Panc1 (cell line): ENCODE measurements at regions of chr11 and their contacts with region 1.

Region 1: DNA sequence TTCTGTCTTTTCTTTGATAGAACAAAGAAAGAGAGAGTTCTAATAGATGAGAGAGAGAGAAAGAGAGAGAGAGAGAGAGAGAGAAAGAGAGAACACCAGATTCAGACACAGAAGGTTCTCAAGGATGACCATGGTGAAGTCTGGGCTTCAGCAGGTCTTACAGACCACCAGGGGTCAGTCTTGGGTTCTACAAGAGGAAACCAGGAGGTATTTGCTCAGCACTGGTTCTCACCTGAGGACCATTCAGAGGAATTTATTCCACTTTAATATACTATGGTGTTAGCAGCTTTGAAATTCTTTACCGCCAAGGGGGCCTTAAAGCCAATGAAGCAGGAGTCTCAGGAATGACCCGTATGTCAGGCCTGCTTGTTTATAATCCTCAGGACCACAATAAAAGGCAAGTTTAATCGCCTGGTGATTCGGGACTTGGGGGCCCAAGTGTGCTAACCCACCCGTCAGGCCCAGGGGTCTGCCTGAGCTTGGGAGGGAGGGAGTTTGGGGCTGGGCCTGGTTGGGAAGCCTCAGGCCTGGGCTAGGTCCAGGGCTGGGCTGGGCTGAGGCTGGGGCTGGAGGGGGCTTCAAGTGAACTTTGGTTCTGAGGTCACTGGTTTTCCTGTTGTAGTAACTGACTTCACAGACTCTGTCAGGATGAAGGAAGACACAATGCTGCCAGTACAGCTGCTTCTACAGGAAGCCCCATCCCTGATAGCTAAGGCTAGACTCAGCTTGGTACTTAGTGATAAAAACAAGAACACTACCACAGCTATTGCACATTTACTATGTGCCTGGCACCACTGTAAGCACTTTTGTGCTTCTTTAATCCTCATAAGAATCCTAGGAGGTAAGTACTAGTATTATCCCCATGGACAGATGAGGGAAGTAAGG is 179.2 kb upstream of the ZBED5 start:
- DNase-seq: peak; percentile 45
- ATAC-seq: peak; percentile 91
- H3K4me3 ChIP-seq: no peak overlapping the region
- H3K27ac ChIP-seq: no peak overlapping the region
- H3K4me1 ChIP-seq: no peaks in the 10 kb centered on the region
- H3K27me3 ChIP-seq: no peaks in the 10 kb centered on the region
- CTCF ChIP-seq: peak; percentile 90

Region 2: DNA sequence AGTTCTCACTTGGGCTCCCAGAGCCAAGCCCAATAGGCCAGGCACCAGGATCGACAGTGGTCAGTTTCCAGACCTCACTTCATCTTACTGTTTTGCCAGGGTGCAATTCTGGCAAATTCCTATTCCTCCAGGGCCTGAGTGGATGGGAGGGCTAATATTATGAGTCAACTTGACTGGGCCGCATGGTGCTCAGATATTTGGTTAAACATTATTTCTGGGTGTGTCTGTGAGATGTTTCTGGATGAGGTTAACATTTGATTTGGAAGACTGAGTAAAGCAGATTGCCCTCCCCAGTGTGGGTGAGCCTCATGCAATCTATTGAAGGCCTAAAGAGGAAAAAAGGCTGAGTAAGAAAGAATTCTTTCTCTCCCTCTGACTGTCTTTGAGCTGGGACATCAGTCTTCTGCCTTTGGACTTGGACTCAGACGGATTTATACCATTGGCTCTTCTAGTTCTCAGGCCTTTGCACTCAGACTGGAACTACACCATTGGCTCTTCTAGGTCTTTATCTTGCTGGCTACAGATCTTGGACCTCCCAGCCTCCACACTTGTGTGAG is 46.4 kb before region 1 on chr11:
- CTCF ChIA-PET with region 1: no interaction called
- POLR2A ChIA-PET with region 1: no interaction called
- in situ Hi-C with region 1: no loop called
- intact Hi-C with region 1: no loop called
- DNase-seq: no peak
- ATAC-seq: no peak
- H3K4me3 ChIP-seq: no peak overlapping the region
- H3K27ac ChIP-seq: no peak overlapping the region
- H3K4me1 ChIP-seq: no peaks in the 10 kb centered on the region
- H3K27me3 ChIP-seq: no peaks in the 10 kb centered on the region
- CTCF ChIP-seq: no peak

Region 3: DNA sequence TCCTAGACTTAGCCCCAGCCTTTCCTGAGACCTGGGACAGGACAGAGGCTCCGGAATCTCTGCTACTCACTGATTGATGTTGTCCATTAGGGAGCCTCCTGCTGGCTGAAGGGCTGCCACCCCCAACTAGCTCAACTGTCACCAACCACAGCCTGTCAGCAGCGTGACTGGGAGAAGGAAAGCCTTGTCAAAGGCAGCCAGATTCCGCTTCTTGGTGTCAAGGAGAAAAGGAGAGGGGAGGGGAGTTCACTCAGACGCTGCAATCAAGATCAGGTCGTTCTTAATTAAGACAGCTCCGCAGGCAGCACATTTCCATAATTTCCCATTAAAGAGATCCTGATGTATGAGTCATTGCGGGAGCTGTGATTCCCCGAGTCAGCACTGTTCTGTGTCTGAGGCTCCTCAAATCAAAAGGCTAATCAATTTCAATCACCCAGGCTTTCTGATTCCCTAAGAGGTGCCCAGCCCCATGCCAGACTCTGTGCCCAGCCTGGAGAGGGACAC is 26.4 kb before region 1 on chr11:
- CTCF ChIA-PET with region 1: no interaction called
- POLR2A ChIA-PET with region 1: no interaction called
- in situ Hi-C with region 1: no loop called
- intact Hi-C with region 1: no loop called
- DNase-seq: no peak
- ATAC-seq: peak; percentile 98
- H3K4me3 ChIP-seq: peak overlapping the region in 1 of 2 experiments; percentile 15; a peak in 2 of 4 replicates
- H3K27ac ChIP-seq: peak overlapping the region; percentile 36
- H3K4me1 ChIP-seq: peaks cover 12% of the 10 kb centered on the region
- H3K27me3 ChIP-seq: no peaks in the 10 kb centered on the region
- CTCF ChIP-seq: peak; percentile 72

Region 4: GRCh38 chr11:11157185-11157584 is 120.1 kb after region 1 on chr11:
- CTCF ChIA-PET with region 1: no interaction called
- POLR2A ChIA-PET with region 1: no interaction called
- in situ Hi-C with region 1: no loop called
- intact Hi-C with region 1: loop called (anchors 10 kb)
- DNase-seq: no peak
- ATAC-seq: peak; percentile 87
- H3K4me3 ChIP-seq: no peak overlapping the region
- H3K27ac ChIP-seq: no peak overlapping the region
- H3K4me1 ChIP-seq: no peaks in the 10 kb centered on the region
- H3K27me3 ChIP-seq: no peaks in the 10 kb centered on the region
- CTCF ChIP-seq: peak; percentile 82

Region 5: DNA sequence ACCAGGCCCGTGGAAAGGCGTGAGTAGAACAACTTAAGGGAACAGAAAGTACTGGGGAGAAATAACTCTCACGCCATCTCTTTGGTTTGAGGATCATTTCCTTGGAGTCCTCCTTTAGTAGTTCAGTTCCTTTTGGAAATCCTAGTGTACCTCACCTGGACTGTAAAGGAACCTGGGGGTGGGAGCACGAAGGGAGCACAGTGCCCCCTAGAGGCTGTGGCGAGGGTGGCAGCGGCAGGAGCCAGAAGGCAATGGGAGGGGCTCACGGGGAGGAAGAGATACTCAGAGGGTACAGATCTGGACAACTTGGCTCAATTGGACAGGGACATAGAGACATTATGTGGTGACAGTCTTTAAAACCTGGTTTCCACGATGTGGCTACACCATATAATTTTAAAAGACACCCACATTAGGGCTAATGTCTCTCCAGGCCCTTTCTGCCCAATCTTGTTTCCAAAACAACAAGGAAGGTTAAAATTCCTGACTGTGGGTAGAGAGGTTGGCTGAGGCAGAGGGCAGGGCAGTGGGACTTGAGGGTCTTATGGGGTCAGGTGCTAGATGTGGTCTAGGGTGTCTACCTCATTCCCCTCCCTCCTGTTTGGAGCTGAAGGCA is 229.0 kb after region 1 on chr11:
- CTCF ChIA-PET with region 1: no interaction called
- POLR2A ChIA-PET with region 1: interaction called, 3 read pairs
- in situ Hi-C with region 1: no loop called
- intact Hi-C with region 1: loop called (anchors 10 kb)
- DNase-seq: peak; percentile 28
- ATAC-seq: peak; percentile 69
- H3K4me3 ChIP-seq: no peak overlapping the region
- H3K27ac ChIP-seq: no peak overlapping the region
- H3K4me1 ChIP-seq: no peaks in the 10 kb centered on the region
- H3K27me3 ChIP-seq: no peaks in the 10 kb centered on the region
- CTCF ChIP-seq: peak; percentile 95